Activated CD4-positive, alpha-beta T cell treated with anti-CD3 and anti-CD28 coated beads for 36 hours (primary cell): ENCODE measurements at regions of chr18 and their contacts with region 1.

Region 1: DNA sequence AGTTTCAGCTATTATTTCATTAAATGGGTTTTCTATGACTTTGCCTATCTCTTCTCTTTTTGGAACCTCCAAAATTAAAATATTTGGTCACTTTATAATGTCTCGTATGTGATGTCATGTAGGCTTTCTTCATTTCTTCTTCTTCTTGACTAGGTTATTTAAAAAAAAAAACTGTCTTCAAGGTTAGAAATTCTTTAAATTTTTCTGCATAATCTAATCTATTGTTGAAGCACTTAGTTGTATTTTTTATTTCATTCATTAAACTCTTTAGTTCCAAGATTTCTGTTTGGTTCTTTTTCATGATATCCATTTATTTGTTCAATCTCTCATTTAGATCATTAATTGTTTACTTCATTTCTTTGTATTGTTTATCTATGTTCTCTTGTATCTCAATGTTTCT is 43.8 kb upstream of the ROCK1 start:
- DNase-seq: no peak
- ATAC-seq: no peak
- H3K4me3 Mint-ChIP-seq: no peak overlapping the region
- H3K27ac Mint-ChIP-seq: no peak overlapping the region
- H3K4me1 Mint-ChIP-seq: no peaks in the 10 kb centered on the region
- H3K27me3 Mint-ChIP-seq: peaks cover 6% of the 10 kb centered on the region

Region 2: DNA sequence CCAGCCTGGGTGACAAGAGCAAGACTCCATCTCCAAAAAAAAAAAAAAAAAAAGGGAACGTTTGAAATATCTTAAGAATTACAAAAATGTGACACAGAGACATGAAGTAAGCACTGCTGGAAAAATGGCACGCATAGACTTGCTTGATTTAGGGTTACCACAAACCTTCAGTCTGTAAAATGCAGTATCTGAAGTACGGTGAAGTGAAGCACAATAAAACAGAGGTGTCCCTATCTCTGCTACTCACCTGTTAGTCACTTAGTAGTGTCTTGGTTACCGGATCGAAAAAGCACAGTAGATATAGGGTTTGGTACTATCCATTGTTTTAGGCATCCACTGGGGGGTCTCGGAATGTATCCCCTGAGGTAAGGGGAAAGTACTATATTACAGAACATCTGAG is 75.0 kb after region 1 on chr18:
- CTCF ChIA-PET with region 1: no interaction called
- POLR2A ChIA-PET with region 1: no interaction called
- intact Hi-C with region 1: loop called in 1 of 2 experiments (anchors 10 kb)
- DNase-seq: no peak
- ATAC-seq: no peak
- H3K4me3 Mint-ChIP-seq: no peak overlapping the region
- H3K27ac Mint-ChIP-seq: no peak overlapping the region
- H3K4me1 Mint-ChIP-seq: no peaks in the 10 kb centered on the region
- H3K27me3 Mint-ChIP-seq: no peaks in the 10 kb centered on the region